ENCODE measurements at regions of chr13 and their contacts with region 1.

Region 1: DNA sequence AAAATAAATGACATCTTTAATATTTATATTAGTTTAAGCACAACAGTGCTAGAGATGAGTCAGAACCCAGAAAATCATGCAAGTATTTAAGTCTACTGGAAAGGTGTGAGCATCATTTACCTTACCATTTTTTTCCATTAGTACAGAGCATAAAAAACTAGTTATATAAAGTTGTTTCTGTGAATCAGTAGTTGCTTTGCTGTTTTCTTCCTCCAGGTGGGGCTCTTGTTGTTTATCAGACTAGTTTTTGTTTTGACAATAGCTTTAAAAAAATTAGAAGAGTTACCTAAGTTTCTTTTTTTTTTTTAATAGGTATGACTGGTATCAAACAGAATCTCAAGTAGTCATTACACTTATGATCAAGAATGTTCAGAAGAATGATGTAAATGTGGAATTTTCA is 12.7 kb downstream of the SUGT1 start:
- DNase-seq: peak; percentile 20
- H3K27ac ChIP-seq: no peak overlapping the region
- CTCF ChIP-seq: peak; percentile 69

Region 2: DNA sequence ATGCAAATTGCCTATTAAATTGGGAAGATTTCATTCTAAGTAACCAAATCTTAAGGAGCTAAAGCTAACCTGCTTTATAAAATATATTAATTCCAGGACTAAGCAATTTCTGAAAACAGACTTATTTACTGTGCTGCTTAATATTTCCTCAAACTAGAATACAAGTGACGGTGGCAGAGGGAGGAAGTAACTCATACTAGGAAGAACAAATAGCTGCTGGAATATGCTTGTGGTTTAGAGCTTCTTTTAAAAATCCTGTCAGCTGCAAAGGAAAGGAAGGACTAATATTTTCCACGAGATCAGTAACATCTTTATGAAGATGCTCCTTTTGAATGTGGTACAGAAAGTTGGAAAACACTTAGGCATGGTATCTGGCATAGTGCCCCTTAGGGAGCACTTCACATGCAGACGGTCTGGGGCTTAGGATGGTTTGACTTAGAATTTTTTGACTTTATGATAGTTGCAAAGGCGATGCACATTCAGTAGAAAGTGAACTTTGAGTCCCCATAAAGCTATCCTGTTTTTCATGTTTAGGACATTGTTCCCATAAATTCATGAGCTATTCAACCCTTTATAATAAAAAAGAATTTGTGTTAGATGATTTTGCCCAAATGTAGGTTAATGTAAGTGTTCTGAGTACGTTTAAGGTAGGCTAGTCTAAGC is 26.5 kb before region 1 on chr13:
- CTCF ChIA-PET with region 1: no interaction called
- POLR2A ChIA-PET with region 1: no interaction called
- DNase-seq: no peak
- H3K27ac ChIP-seq: no peak overlapping the region
- CTCF ChIP-seq: no peak

Region 3: DNA sequence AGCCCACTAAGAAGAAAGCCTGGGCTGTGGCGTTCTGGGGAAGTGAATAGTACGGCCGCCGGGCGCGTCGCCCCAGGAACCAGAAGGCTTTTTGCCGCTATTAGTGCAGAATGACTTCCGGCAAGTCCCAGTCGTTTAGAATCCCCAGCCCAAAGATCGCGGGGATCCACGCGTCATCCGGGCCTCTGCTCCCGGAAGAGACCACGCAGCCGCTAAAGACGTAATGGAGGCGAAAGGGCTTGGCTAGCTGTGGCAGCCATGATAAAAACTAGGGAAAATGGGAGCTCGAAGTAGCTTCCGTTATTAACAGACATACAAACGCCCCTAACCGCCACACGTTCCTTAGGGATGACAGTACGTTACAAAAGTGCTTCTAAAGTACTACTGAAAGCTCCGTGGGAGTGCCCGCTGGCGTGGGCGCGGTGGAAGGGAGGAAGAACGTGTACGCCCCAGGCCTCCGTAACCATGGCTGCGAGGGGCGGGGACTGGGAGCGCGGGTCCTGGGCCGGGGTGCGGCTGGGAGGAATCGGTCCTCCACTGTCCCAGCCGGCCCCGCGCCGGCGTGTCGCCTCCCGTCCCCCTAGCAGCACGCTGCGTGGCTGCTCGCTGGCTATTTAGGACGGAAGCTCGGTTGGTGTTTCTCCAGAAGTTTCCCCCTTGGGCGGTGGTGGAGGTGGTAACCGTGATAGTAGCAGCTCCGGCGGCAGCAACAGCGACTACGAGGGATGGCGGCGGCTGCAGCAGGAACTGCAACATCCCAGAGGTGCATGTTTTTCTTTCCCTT is 12.9 kb before region 1 on chr13 and contains the start of gene SUGT1:
- CTCF ChIA-PET with region 1: interaction called, 16 read pairs
- POLR2A ChIA-PET with region 1: no interaction called
- DNase-seq: peak; percentile 89
- H3K27ac ChIP-seq: peak within 1 kb of the TSS; percentile 98
- CTCF ChIP-seq: peak; percentile 74

Region 4: DNA sequence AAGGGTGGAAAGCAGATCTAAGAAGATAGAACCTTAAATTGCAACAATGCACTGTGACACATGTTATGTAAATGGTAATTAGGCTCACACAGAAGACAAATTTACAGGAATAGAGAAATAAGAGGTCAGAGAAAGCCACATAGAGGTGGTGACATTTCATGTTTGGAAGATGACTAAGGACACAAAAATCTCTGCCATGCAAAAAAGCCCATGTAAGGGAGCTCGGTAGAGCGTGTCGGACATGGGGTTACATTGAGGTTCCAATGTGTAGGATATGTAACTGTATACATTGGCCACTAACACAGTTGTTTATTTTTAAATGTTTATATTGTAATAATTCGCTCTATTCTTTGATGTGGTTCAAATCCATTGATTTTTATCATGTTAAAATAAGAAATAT is 21.1 kb after region 1 on chr13:
- CTCF ChIA-PET with region 1: no interaction called
- POLR2A ChIA-PET with region 1: no interaction called
- DNase-seq: no peak
- H3K27ac ChIP-seq: no peak overlapping the region
- CTCF ChIP-seq: no peak

Measured in RWPE1 (cell line).